ENCODE measurements at regions of chr10 and their contacts with region 1.

Region 1: GRCh38 chr10:68752711-68753350 is 31.8 kb downstream of the CCAR1 start:
- DNase-seq: no peak
- H3K4me3 ChIP-seq: no peak overlapping the region
- H3K27ac ChIP-seq: no peak overlapping the region
- H3K4me1 ChIP-seq: no peaks in the 10 kb centered on the region
- H3K27me3 ChIP-seq: no peaks in the 10 kb centered on the region
- CTCF ChIP-seq: no peak
- EP300 ChIP-seq: no peak
- POLR2A ChIP-seq: no peak

Region 2: DNA sequence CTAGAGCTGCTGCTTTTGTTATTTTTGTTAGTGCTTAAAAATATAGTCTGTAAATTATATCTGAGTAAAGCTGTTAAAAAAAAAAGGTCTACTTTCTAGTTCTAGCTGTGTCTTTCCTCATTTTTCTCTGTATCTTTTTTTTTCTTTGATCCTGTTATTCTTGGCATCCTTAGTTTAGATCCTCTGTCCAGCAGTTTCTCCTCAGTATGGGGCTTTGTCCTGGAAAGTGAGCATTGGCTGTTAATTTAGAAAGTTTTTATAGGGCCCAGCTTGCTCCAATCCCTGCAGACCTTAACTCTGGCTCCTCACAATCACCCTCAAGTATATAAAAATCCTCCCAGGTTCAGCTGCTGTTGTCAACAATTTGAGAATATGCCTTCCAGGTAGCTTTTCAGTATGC is 171.8 kb after region 1 on chr10:
- intact Hi-C with region 1: loop called (anchors 10 kb)
- DNase-seq: no peak
- H3K4me3 ChIP-seq: no peak overlapping the region
- H3K27ac ChIP-seq: peak overlapping the region in 1 of 4 donors; percentile 25
- H3K4me1 ChIP-seq: peaks cover 0 to 12% (median 0%) of the 10 kb centered on the region in 4 donors
- H3K27me3 ChIP-seq: no peaks in the 10 kb centered on the region
- CTCF ChIP-seq: no peak
- EP300 ChIP-seq: no peak
- POLR2A ChIP-seq: no peak